Head of caudate nucleus (tissue), 42 donors: ENCODE measurements at regions of chr9 and their contacts with region 1.

Region 1: DNA sequence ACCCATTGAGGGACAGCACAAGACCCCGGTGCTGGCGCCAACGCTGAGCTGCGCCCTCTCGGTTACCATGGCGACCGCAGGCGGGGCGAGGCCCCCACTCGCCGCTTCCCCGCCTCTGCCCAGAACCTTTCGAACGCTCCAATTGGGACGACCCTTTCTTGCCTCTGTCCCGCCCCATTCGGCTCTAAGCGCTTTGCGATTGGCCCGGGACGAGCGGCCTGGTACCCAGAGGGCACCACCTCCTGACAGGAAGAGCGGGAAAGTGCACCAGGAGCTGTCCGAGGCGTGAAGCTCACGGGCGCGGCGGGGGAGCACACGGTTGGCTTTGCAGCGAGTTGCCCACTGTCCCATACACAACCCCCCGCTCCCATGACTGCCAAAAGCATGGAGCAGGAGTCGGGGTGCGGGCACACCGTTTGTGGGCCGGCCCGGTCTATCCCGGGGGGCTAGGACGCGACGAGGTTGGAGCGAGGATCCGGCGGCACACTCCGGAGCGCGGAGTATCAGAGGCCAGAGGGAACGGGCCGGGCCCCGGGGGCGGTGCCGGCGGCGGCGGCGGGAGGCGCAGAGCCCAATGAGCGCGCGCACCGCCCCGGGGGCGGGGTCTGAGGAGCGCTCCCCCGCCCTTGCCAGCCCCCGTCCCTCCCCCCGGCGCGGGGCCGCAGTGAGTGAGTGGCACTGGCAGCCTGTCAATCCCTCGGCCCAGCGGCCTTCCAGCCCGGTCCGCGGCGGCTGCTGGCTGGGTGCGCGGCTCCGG is 978 bp upstream of the PBX3 start:
- DNase-seq: peak; percentile 92 to 99 (median 98)

Region 2: DNA sequence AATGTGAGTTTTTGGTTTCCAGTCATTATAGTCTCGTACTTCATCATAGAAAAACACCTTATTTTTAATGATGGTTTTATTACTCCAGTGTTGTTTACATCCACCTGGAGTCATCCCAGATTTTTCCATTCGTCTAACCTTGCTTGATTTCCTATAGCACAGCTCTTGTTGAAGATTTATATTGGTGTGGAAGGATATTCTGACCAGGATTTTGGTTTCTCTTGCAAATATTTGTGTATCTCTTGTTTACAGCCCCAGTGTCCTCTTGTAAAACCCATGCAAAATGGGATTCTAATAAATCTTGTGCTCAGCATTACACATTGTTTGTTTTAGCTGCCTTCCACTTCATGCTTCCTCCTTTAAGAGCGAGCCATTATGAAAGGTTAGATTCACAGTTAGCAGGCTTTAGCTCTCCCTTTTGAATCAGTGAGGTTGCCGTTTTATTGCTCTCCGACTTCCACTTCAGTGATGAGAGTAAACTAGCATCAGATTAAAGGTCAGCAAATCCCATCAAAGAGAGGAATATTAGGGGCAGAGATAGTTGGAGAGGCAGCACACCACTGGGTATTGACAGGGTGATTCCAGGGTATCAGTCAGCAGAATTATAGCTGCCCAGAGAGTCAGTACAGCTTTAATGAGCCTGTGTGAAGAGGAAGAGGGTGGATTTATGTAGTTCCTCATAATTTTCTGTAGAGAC is 158.1 kb after region 1 on chr9:
- intact Hi-C with region 1: loop called (anchors 10 kb)
- DNase-seq: no peak